ENCODE measurements at regions of chr12 and their contacts with region 1.

Region 1: DNA sequence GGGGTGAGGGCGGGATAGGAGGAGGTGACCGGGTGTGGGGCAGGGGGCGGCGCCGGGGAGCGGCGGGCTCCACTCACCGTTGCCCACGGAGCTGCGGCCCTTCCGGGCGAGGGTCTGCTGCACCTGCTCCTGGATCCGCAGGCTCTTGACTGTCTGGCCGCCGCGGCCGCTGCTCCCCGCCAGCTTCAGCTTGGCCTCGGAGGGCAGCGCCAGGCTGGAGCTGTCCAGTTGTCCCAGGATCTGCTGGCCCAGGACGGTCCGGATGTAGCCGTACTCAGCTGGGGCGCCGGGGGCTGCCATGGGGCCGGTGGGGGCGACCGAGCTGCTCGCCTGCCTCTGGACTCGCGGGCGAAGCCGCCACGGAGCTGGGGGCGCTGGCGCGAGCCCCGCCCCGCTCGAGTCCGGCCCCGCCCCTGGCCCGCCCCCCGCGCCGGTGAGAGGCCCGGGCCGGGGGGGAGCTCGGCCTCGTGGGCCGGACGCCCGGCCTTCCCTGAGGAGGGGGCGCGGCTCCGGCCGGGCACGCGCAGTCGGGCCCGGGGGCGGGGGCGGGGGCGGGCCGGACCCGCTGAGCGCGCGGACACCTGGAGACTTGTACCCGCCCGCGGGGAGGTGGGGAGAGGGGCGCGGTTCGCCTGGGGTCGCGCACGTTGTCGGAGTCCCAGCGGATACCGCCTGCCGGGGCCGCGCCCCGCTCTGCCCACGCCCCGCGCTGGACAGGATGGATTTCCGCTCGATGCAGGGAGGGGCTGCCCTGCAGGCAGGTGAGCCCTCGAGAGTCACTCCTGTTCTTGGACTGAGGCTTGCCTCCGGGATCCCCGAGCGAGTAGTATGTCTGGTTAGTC is at the start of gene PKP2:
- DNase-seq: peak; percentile 16
- ATAC-seq: peak; percentile 83
- H3K4me3 Mint-ChIP-seq: peak within 1 kb of the TSS; percentile 78
- H3K27ac Mint-ChIP-seq: no peak within 1 kb of the TSS
- H3K4me1 Mint-ChIP-seq: peaks cover 12% of the 10 kb centered on the region
- H3K27me3 Mint-ChIP-seq: peaks cover 49% of the 10 kb centered on the region
- CTCF ChIP-seq: no peak
- total RNA-seq, gene PKP2: not detected in 2 replicates

Region 2: DNA sequence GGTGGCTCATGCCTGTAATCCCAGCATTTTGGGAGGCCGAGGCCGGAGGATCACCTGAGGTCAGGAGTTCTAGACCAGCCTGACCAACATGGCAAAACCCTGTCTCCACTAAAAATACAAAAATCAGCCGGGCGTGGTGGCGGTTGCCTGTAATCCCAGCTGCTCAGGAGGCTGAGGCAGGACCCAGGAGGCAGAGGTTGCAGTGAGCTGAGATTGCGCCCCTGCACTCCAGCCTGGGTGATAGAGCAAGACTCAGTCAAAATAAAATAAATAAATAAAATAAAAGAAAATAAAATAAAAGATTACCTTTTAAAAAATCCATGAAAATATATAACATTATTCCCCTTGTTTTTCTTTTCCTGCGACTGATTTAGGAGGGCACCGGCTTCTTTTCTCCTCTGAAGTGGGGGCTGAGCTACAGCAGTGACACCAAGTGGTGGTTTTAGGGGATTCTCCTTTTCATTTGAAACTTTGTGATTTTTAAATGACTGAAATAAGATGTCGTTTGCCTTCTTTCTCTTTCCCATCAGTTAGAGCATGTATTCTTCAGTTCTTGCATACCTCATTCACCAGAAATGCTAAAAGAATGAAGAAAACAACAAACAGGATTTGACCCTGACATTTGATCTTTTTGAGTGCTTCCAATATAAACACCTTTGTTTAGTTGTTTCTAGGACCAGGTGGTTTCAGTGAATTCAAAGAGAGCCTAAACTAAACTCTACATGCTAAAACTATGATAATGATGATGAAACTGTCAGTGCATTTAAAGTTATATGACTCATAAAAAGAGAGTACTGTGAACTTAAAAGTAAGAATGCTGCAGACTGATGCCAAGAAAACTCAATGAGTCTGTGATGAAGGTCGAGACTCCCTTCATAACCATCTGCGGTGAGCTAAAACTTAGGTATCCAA is 22.5 kb after region 1 on chr12:
- CTCF ChIA-PET with region 1: no interaction called
- POLR2A ChIA-PET with region 1: no interaction called
- intact Hi-C with region 1: no loop called
- DNase-seq: no peak
- ATAC-seq: no peak
- H3K4me3 Mint-ChIP-seq: no peak overlapping the region
- H3K27ac Mint-ChIP-seq: no peak overlapping the region
- H3K4me1 Mint-ChIP-seq: no peaks in the 10 kb centered on the region
- H3K27me3 Mint-ChIP-seq: peaks cover 4% of the 10 kb centered on the region
- CTCF ChIP-seq: no peak

Region 3: DNA sequence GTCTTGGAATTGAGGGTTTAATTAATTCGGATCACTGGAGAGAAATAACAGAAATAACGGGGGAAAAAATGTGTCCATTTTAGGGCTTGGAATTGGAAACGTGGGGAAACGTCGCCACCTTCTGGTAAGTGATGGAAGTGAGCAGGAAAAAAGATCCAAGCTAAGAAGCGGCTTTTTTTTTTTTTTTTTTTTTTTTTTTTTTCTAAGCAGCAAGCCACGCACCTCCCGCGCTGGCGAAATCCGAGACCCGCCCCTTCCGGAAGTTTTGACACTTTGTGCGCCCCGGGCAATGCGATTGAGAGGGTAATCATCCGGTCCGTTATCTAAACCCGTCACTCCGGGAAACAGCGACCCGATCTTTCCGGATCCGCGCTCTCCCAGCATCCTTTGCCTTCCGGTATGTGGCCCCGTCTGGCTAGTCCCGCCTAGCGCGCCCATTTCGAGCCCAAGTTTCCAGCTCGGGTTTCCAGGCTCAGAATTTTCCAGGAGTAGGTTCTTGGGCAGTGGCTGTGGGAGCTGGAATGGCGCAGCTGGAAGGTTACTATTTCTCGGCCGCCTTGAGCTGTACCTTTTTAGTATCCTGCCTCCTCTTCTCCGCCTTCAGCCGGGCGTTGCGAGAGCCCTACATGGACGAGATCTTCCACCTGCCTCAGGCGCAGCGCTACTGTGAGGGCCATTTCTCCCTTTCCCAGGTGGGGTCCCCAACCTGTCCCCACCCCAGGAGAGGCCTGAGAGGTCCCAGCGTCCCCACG is 1125.6 kb after region 1 on chr12 and contains the start of gene ALG10:
- CTCF ChIA-PET with region 1: no interaction called
- POLR2A ChIA-PET with region 1: no interaction called
- intact Hi-C with region 1: loop called (anchors 10 kb)
- DNase-seq: peak; percentile 90
- ATAC-seq: peak; percentile 98
- H3K4me3 Mint-ChIP-seq: peak within 1 kb of the TSS; percentile 94
- H3K27ac Mint-ChIP-seq: peak within 1 kb of the TSS; percentile 92
- H3K4me1 Mint-ChIP-seq: peaks cover 16% of the 10 kb centered on the region
- H3K27me3 Mint-ChIP-seq: peaks cover 4% of the 10 kb centered on the region
- CTCF ChIP-seq: peak; percentile 53
- total RNA-seq, gene ALG10: 14.8 and 19.6 TPM in 2 replicates